Breast epithelium (tissue), 4 donors: ENCODE measurements at regions of chr6 and their contacts with region 1.

Region 1: GRCh38 chr6:48325701-48326100 is 214.7 kb upstream of the PTCHD4 start:
- DNase-seq: no peak
- H3K4me3 ChIP-seq: no peak overlapping the region
- H3K27ac ChIP-seq: no peak overlapping the region
- H3K4me1 ChIP-seq: no peaks in the 10 kb centered on the region
- H3K27me3 ChIP-seq: no peaks in the 10 kb centered on the region
- CTCF ChIP-seq: no peak
- POLR2A ChIP-seq: no peak

Region 2: DNA sequence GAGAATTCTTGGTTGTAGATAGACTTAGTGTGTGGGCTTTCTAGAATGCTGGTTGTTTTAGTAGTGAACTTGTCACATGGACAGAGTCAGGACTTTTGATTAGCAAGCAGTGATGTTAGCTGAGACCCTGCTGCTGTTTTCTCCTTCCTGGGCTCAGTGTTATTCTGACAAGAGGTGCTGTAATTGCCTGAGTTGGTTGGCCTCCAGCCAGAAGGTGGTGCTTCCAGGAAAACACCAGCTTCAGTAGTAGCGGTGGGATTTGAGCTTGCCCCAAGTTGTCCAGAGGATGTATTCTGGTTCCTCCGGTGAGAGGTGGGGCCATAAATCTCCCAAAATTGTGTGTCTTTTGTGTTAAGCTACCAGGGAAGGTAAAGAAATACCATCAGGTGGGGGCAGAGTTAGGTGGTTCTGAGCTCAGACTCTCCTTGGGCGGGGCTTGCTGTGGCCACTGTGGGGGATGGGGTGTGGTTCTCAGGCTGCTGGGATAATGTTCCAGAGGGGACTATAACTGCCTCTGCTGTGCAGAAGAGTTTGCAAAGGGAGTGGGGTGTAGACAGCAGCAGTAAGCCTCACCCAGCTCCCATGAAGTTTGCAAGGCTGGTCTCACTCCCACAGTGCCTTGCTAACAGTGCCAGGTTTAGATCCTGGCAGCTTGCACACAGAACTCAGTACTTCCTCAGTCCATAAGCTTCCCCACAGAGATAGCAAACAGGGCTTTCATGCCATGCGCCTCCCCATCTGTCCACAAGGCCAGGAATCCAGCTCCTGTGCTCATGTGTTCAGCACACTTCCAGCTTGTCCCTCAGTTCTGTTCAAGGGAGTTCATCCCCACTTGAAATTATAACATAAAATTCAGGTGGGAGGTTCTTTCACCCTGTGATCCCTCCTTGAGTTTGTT is 63.7 kb after region 1 on chr6:
- intact Hi-C with region 1: loop called (anchors 5 kb)
- DNase-seq: no peak
- H3K4me3 ChIP-seq: no peak overlapping the region
- H3K27ac ChIP-seq: no peak overlapping the region
- H3K4me1 ChIP-seq: no peaks in the 10 kb centered on the region
- H3K27me3 ChIP-seq: no peaks in the 10 kb centered on the region
- CTCF ChIP-seq: no peak
- POLR2A ChIP-seq: no peak